GM12878 (cell line): ENCODE measurements at regions of chr17 and their contacts with region 1.

Region 1: GRCh38 chr17:1628856-1629646 is 417 bp upstream of the SLC43A2 start:
- DNase-seq: no peak
- ATAC-seq: peak; percentile 84
- H3K4me3 ChIP-seq: peak overlapping the region; percentile 88
- H3K27ac ChIP-seq: peak overlapping the region; percentile 87
- H3K4me1 ChIP-seq: peaks cover 42% of the 10 kb centered on the region
- H3K27me3 ChIP-seq: no peaks in the 10 kb centered on the region
- CTCF ChIP-seq: peak in 2 of 3 experiments; percentile 30 to 51; a peak in 4 of 6 replicates
- EP300 ChIP-seq: no peak
- POLR2A ChIP-seq: peak; percentile 70
- RAD21 ChIP-seq: peak; percentile 40; the same call in 1 of the 2 replicates

Region 2: GRCh38 chr17:1331708-1332107 is 297.3 kb before region 1 on chr17:
- CTCF ChIA-PET with region 1: interaction called, 11 read pairs
- POLR2A ChIA-PET with region 1: no interaction called
- RAD21 ChIA-PET with region 1: interaction called, 5 read pairs
- SMC1A ChIA-PET with region 1: no interaction called
- in situ Hi-C with region 1: no loop called
- intact Hi-C with region 1: no loop called
- DNase-seq: no peak
- ATAC-seq: no peak
- H3K4me3 ChIP-seq: no peak overlapping the region
- H3K27ac ChIP-seq: no peak overlapping the region
- H3K4me1 ChIP-seq: no peaks in the 10 kb centered on the region
- H3K27me3 ChIP-seq: no peaks in the 10 kb centered on the region; a peak in 1 of 4 replicates
- CTCF ChIP-seq: no peak
- EP300 ChIP-seq: no peak
- POLR2A ChIP-seq: no peak
- RAD21 ChIP-seq: no peak

Region 3: DNA sequence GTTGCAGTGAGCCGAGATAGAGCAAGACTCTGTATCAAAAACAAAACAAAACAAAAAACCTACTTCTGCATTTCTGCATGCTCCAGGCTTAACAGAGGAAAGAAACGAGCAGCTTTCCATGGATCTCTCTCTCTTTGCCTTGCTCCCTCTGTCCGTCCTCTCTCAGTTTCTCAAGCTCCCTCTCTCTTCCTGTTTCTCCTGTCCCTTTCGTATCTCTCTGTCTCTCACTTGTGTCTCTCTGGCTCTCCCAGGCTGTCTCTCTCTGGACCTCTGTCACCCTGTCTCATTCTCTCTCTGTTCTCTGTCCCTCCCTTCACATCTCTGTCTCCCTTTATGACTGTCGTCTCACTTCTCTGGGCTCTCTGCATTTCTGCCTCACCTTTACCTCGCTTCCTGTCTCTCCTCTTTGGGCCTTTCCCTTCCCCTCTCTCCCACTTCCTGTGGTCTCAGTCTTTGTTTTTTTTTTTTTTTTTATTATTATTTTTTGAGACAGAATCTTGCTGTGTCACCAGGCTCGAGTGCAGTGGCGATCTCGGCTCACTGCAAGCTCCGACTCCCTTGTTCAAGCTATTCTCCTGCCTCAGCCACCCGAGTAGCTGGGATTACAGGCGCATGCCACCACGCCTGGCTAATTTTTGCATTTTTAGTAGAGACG is 62.4 kb before region 1 on chr17:
- CTCF ChIA-PET with region 1: interaction called, 380 read pairs
- POLR2A ChIA-PET with region 1: interaction called, 5 read pairs
- RAD21 ChIA-PET with region 1: interaction called, 317 read pairs
- SMC1A ChIA-PET with region 1: interaction called, 7 read pairs
- in situ Hi-C with region 1: loop called (anchors 10 kb)
- intact Hi-C with region 1: no loop called
- DNase-seq: peak; percentile 76
- ATAC-seq: peak; percentile 79
- H3K4me3 ChIP-seq: peak overlapping the region; percentile 67
- H3K27ac ChIP-seq: peak overlapping the region; percentile 86
- H3K4me1 ChIP-seq: peaks cover 12% of the 10 kb centered on the region
- H3K27me3 ChIP-seq: no peaks in the 10 kb centered on the region
- CTCF ChIP-seq: no peak
- EP300 ChIP-seq: no peak
- POLR2A ChIP-seq: peak; percentile 53; the same call in 1 of the 2 replicates
- RAD21 ChIP-seq: no peak

Region 4: GRCh38 chr17:1590031-1590748 is 38.9 kb before region 1 on chr17:
- CTCF ChIA-PET with region 1: interaction called, 9 read pairs
- POLR2A ChIA-PET with region 1: interaction called, 6 read pairs
- RAD21 ChIA-PET with region 1: interaction called, 4 read pairs
- SMC1A ChIA-PET with region 1: interaction called, 5 read pairs
- in situ Hi-C with region 1: no loop called
- intact Hi-C with region 1: loop called (anchors 5 kb)
- DNase-seq: no peak
- ATAC-seq: no peak
- H3K4me3 ChIP-seq: no peak overlapping the region
- H3K27ac ChIP-seq: no peak overlapping the region; the same call in 1 of the 2 replicates
- H3K4me1 ChIP-seq: peaks cover 13% of the 10 kb centered on the region
- H3K27me3 ChIP-seq: no peaks in the 10 kb centered on the region
- CTCF ChIP-seq: no peak
- EP300 ChIP-seq: no peak
- POLR2A ChIP-seq: no peak
- RAD21 ChIP-seq: no peak

Region 5: DNA sequence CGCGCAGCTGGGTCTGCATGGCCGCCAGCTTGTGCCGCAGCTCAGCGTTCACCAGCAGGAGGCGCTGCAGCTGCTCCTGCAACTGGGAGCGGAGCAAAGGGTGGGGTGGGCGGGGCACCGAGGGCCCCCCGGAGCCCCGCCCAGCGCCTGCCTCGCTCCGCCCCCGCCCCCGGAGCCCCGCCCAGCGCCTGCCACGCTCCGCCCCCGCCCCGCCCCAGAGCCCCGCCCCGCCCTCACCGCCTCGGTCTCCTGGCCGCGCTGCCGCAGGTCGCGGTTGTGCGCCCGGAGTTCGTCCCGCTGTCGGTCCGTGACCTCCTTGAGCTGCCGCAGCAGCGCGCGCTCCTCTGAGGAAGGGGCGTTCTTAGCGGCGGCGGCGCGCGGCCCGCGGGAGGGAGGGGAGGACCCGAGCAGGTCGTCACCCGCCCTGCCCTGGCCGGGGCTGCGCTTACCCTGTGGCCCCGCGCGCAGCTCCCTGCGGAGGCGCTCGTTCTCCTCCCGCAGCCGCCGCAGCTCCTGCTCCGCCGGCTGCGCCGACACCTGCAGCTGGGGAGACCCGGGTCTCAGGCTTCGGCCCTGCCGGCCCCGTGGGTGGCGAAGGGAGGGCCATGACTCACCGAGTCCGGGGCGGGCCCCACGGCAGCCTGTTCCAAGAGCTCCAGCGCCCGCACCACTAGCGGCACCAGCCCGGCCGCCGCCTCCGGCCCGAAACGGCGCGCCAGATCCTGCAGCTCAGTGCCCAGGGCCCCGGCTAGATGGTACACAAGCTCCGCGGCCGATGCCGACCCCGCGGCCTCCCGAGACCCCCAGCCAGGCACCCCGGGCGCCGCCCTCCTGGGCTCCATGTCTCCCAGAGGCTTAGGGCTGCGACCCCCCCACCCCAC is 20.2 kb after region 1 on chr17:
- CTCF ChIA-PET with region 1: interaction called, 25 read pairs
- POLR2A ChIA-PET with region 1: interaction called, 4 read pairs
- RAD21 ChIA-PET with region 1: interaction called, 11 read pairs
- SMC1A ChIA-PET with region 1: interaction called, 3 read pairs
- in situ Hi-C with region 1: no loop called
- intact Hi-C with region 1: no loop called
- DNase-seq: peak; percentile 58
- ATAC-seq: peak; percentile 70
- H3K4me3 ChIP-seq: peak overlapping the region; percentile 64; the same call in 1 of the 2 replicates
- H3K27ac ChIP-seq: peak overlapping the region; percentile 18
- H3K4me1 ChIP-seq: peaks cover 31% of the 10 kb centered on the region
- H3K27me3 ChIP-seq: no peaks in the 10 kb centered on the region
- CTCF ChIP-seq: peak; percentile 78 to 99 (median 97)
- EP300 ChIP-seq: no peak
- POLR2A ChIP-seq: peak; percentile 73
- RAD21 ChIP-seq: peak; percentile 57

Region 6: GRCh38 chr17:1813088-1813487 is 184.0 kb after region 1 on chr17:
- CTCF ChIA-PET with region 1: no interaction called
- POLR2A ChIA-PET with region 1: no interaction called
- RAD21 ChIA-PET with region 1: no interaction called
- SMC1A ChIA-PET with region 1: no interaction called
- in situ Hi-C with region 1: no loop called
- intact Hi-C with region 1: no loop called
- DNase-seq: no peak
- ATAC-seq: no peak
- H3K4me3 ChIP-seq: no peak overlapping the region
- H3K27ac ChIP-seq: no peak overlapping the region
- H3K4me1 ChIP-seq: no peaks in the 10 kb centered on the region
- H3K27me3 ChIP-seq: no peaks in the 10 kb centered on the region
- CTCF ChIP-seq: no peak
- EP300 ChIP-seq: no peak
- POLR2A ChIP-seq: no peak
- RAD21 ChIP-seq: no peak